Activated CD4-positive, alpha-beta memory T cell treated with anti-CD3 and anti-CD28 coated beads for 36 hours (primary cell): ENCODE measurements at regions of chr7 and their contacts with region 1.

Region 1: GRCh38 chr7:64307254-64308015 is 6.3 kb upstream of the ZNF736 start:
- DNase-seq: peak; percentile 96
- H3K4me3 Mint-ChIP-seq: peak overlapping the region; percentile 90
- H3K27ac Mint-ChIP-seq: peak overlapping the region; percentile 92
- H3K4me1 Mint-ChIP-seq: peaks cover 22% of the 10 kb centered on the region
- H3K27me3 Mint-ChIP-seq: no peaks in the 10 kb centered on the region

Region 2: GRCh38 chr7:63900394-63901203 is 406.8 kb before region 1 on chr7:
- CTCF ChIA-PET with region 1: no interaction called
- POLR2A ChIA-PET with region 1: no interaction called
- intact Hi-C with region 1: loop called (anchors 1 kb)
- DNase-seq: peak; percentile 92
- H3K4me3 Mint-ChIP-seq: peak overlapping the region; percentile 89
- H3K27ac Mint-ChIP-seq: peak overlapping the region; percentile 83
- H3K4me1 Mint-ChIP-seq: peaks cover 3% of the 10 kb centered on the region
- H3K27me3 Mint-ChIP-seq: no peaks in the 10 kb centered on the region

Region 3: GRCh38 chr7:63925623-63926460 is 381.6 kb before region 1 on chr7:
- CTCF ChIA-PET with region 1: no interaction called
- POLR2A ChIA-PET with region 1: no interaction called
- intact Hi-C with region 1: loop called (anchors 1 kb)
- DNase-seq: peak; percentile 91
- H3K4me3 Mint-ChIP-seq: peak overlapping the region; percentile 89
- H3K27ac Mint-ChIP-seq: peak overlapping the region; percentile 93
- H3K4me1 Mint-ChIP-seq: peaks cover 6% of the 10 kb centered on the region
- H3K27me3 Mint-ChIP-seq: no peaks in the 10 kb centered on the region

Region 4: GRCh38 chr7:64183126-64183742 is 124.2 kb before region 1 on chr7:
- CTCF ChIA-PET with region 1: interaction called, 3 read pairs
- POLR2A ChIA-PET with region 1: no interaction called
- intact Hi-C with region 1: loop called (anchors 2 kb)
- DNase-seq: peak; percentile 58
- H3K4me3 Mint-ChIP-seq: no peak overlapping the region
- H3K27ac Mint-ChIP-seq: no peak overlapping the region
- H3K4me1 Mint-ChIP-seq: no peaks in the 10 kb centered on the region
- H3K27me3 Mint-ChIP-seq: peaks cover 8% of the 10 kb centered on the region

Region 5: DNA sequence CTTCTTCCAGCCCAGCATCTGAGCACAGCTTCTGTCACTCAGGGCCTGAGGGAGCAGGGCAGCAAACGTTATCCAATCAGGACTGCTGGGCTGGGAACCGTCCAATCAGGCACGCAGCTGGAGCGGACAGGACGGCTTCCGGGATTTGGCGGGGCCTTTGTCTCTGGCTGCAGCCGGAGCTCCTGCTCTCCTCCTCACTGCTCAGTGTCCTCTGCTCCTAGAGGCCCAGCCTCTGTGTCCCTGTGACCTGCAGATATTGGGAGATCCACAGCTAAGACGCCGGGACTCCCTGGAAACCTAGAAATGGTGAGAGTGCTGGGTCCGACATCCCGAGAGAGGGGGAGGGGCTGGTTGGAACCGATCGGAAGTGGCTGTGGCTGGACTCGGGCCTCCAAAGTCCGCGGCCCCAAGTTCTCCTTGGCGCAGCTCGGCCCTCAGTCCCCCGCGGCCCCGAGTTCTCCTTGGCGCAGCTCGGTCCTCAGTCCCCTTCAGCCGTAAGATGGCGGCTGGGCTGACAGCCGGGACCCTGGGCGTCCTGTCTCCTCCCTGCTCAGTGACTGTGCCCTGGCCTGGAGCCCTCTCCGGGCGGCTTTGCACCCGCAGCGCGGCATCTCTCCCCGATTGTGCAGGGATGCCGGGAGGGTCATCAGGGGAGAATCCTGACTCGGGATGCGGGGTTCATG is 358.7 kb after region 1 on chr7 and contains the start of gene ZNF107:
- CTCF ChIA-PET with region 1: no interaction called
- POLR2A ChIA-PET with region 1: interaction called, 4 read pairs
- intact Hi-C with region 1: loop called (anchors 1 kb)
- DNase-seq: peak; percentile 94
- H3K4me3 Mint-ChIP-seq: peak within 1 kb of the TSS; percentile 90
- H3K27ac Mint-ChIP-seq: peak within 1 kb of the TSS; percentile 95
- H3K4me1 Mint-ChIP-seq: peaks cover 43% of the 10 kb centered on the region
- H3K27me3 Mint-ChIP-seq: no peaks in the 10 kb centered on the region
- total RNA-seq, gene ZNF107: 13.5 to 14.3 TPM